ENCODE measurements at regions of chr9 and their contacts with region 1.

Region 1: GRCh38 chr9:94065535-94065961 is 18.7 kb upstream of the PTPDC1 start:
- H3K4me3 ChIP-seq: no peak overlapping the region
- H3K27ac ChIP-seq: no peak overlapping the region
- H3K4me1 ChIP-seq: no peaks in the 10 kb centered on the region
- CTCF ChIP-seq: peak; percentile 32; the same call in 1 of the 2 replicates

Region 2: GRCh38 chr9:94076557-94076956 is 11.0 kb after region 1 on chr9:
- CTCF ChIA-PET with region 1: interaction called, 15 read pairs
- POLR2A ChIA-PET with region 1: no interaction called
- H3K4me3 ChIP-seq: no peak overlapping the region
- H3K27ac ChIP-seq: no peak overlapping the region
- H3K4me1 ChIP-seq: no peaks in the 10 kb centered on the region
- CTCF ChIP-seq: no peak

Region 3: GRCh38 chr9:94081864-94082463 is 16.4 kb after region 1 on chr9:
- CTCF ChIA-PET with region 1: interaction called, 14 read pairs
- POLR2A ChIA-PET with region 1: no interaction called
- H3K4me3 ChIP-seq: no peak overlapping the region
- H3K27ac ChIP-seq: no peak overlapping the region
- H3K4me1 ChIP-seq: no peaks in the 10 kb centered on the region
- CTCF ChIP-seq: no peak

Region 4: GRCh38 chr9:94166237-94166963 is 100.9 kb after region 1 on chr9:
- CTCF ChIA-PET with region 1: interaction called, 15 read pairs
- POLR2A ChIA-PET with region 1: interaction called, 4 read pairs
- H3K4me3 ChIP-seq: peak overlapping the region; percentile 94
- H3K27ac ChIP-seq: peak overlapping the region; percentile 98
- H3K4me1 ChIP-seq: peaks cover 2% of the 10 kb centered on the region; the same call in 1 of the 2 replicates
- CTCF ChIP-seq: no peak

Region 5: GRCh38 chr9:94213511-94214124 is 148.1 kb after region 1 on chr9:
- CTCF ChIA-PET with region 1: interaction called, 157 read pairs
- POLR2A ChIA-PET with region 1: no interaction called
- H3K4me3 ChIP-seq: no peak overlapping the region
- H3K27ac ChIP-seq: no peak overlapping the region
- H3K4me1 ChIP-seq: no peaks in the 10 kb centered on the region
- CTCF ChIP-seq: peak; percentile 39

Region 6: GRCh38 chr9:94772639-94773303 is 707.2 kb after region 1 on chr9:
- CTCF ChIA-PET with region 1: no interaction called
- POLR2A ChIA-PET with region 1: no interaction called
- H3K4me3 ChIP-seq: no peak overlapping the region
- H3K27ac ChIP-seq: no peak overlapping the region
- H3K4me1 ChIP-seq: no peaks in the 10 kb centered on the region
- CTCF ChIP-seq: no peak

Measured in HEK293 (cell line).